ENCODE measurements at regions of chr19 and their contacts with region 1.

Region 1: GRCh38 chr19:16659831-16660708 is at the start of gene SMIM7:
- DNase-seq: peak; percentile 99
- H3K4me3 Mint-ChIP-seq: peak within 1 kb of the TSS; percentile 98
- H3K27ac Mint-ChIP-seq: peak within 1 kb of the TSS; percentile 97
- H3K4me1 Mint-ChIP-seq: peaks cover 52% of the 10 kb centered on the region
- H3K27me3 Mint-ChIP-seq: peaks cover 13% of the 10 kb centered on the region
- total RNA-seq, gene SMIM7: 52.6 to 60.6 TPM

Region 2: DNA sequence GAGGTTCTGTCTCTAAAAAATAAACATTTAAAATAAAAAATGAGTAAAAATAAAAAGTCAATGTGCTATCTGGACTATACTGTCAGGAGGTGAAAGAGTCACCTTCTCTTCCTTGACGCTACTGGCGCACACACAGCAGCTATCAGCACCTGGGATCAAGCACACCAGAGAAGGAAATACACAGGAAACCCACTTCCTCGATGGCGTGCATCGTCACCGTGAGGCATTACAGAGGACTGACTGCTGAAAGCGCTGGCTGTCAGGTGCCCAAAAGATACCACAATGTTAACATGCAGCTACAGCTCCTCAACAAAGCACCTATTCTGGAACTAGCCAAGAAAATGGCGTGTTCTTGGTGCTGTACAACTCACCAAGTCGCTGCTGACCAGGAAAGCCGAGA is 93.9 kb before region 1 on chr19:
- CTCF ChIA-PET with region 1: no interaction called
- POLR2A ChIA-PET with region 1: interaction called, 12 read pairs
- DNase-seq: peak; percentile 91
- H3K4me3 Mint-ChIP-seq: peak overlapping the region; percentile 62
- H3K27ac Mint-ChIP-seq: peak overlapping the region; percentile 100
- H3K4me1 Mint-ChIP-seq: peaks cover 61% of the 10 kb centered on the region
- H3K27me3 Mint-ChIP-seq: no peaks in the 10 kb centered on the region

Region 3: DNA sequence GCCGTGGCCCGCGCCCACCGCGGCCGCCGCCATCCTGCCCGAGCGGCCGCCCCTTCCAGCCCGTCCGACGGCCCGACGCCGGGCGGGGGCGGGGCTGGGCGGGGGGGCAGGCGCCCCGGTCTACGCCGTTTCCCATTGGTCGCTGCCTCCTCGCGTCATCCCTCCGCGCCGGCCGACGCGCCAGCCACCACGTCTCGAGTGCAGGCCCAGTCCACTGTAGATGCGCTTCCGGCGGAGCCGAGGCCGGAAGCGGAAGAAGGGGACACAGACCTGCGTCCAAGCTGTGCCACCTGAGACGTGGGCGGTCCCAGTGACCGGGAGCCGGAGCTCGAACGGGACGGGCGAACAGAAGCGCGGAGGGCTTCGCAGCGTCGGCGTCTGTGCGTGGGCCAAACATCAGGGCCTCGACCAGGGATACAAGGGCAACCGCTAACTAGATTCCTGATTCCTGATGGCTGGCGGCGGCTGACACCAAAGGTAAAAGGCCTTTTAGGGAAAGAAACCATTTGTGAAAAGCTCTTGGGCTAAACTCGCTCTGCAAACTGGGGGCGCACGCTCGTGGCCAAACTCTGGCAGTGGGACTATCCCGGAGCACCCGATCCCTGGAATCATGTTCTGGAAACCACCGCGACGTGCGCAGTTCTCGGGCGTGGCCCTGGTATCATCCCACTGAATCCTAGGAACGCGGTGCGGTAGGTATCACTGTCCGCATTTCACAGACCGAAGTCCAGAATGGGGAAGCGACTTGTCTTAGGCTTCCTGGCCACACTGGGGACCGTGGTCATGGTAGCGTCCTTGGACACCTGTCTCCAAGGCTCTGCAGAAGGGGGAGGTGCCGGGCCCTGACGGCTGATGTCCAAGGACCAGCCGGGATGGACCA is 87.5 kb before region 1 on chr19 and contains the start of gene SLC35E1:
- CTCF ChIA-PET with region 1: no interaction called
- POLR2A ChIA-PET with region 1: interaction called, 13 read pairs
- DNase-seq: peak; percentile 93
- H3K4me3 Mint-ChIP-seq: peak within 1 kb of the TSS; percentile 93
- H3K27ac Mint-ChIP-seq: peak within 1 kb of the TSS; percentile 90
- H3K4me1 Mint-ChIP-seq: peaks cover 68% of the 10 kb centered on the region
- H3K27me3 Mint-ChIP-seq: no peaks in the 10 kb centered on the region
- total RNA-seq, gene SLC35E1: 57.3 to 57.7 TPM

Region 4: GRCh38 chr19:16584248-16585141 is 75.6 kb before region 1 on chr19:
- CTCF ChIA-PET with region 1: interaction called, 4 read pairs
- POLR2A ChIA-PET with region 1: interaction called, 12 read pairs
- DNase-seq: peak; percentile 93
- H3K4me3 Mint-ChIP-seq: peak overlapping the region; percentile 77
- H3K27ac Mint-ChIP-seq: peak overlapping the region; percentile 90
- H3K4me1 Mint-ChIP-seq: peaks cover 83% of the 10 kb centered on the region
- H3K27me3 Mint-ChIP-seq: no peaks in the 10 kb centered on the region

Region 5: GRCh38 chr19:16649734-16650133 is 10.3 kb before region 1 on chr19:
- CTCF ChIA-PET with region 1: no interaction called
- POLR2A ChIA-PET with region 1: interaction called, 22 read pairs
- DNase-seq: no peak
- H3K4me3 Mint-ChIP-seq: no peak overlapping the region
- H3K27ac Mint-ChIP-seq: no peak overlapping the region
- H3K4me1 Mint-ChIP-seq: peaks cover 11% of the 10 kb centered on the region
- H3K27me3 Mint-ChIP-seq: no peaks in the 10 kb centered on the region

Region 6: DNA sequence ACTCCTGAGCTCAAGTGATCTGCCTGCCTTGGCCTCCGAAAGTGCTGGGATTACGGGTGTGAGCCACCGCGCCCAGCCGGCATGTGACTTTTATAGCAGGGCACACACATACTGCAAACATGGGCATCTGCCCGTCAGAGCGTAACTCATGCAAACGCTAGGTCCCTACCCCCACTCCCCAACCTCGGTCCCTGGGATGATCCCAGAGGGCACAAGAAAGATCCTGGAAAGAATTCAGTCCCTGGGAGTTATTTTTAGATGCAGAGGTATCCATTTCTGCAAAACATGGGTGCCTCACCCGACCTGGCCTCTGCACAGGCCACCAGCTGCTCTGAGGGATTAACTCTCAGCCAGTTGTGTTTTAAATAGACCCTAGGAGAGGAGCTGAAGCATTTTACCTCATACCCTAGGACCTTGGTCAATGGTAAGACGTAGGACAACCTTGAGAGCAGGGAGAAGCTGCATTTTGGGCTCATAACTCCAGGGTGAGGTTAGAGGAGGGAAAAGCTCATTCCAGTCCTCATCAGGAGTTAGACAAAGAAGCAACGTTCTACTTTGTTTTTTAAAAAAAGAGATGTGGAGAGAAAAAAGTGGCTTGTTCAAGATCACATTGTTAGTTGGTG is 11.7 kb after region 1 on chr19:
- CTCF ChIA-PET with region 1: interaction called, 7 read pairs
- POLR2A ChIA-PET with region 1: interaction called, 13 read pairs
- DNase-seq: no peak
- H3K4me3 Mint-ChIP-seq: no peak overlapping the region
- H3K27ac Mint-ChIP-seq: no peak overlapping the region
- H3K4me1 Mint-ChIP-seq: no peaks in the 10 kb centered on the region
- H3K27me3 Mint-ChIP-seq: no peaks in the 10 kb centered on the region

Region 7: DNA sequence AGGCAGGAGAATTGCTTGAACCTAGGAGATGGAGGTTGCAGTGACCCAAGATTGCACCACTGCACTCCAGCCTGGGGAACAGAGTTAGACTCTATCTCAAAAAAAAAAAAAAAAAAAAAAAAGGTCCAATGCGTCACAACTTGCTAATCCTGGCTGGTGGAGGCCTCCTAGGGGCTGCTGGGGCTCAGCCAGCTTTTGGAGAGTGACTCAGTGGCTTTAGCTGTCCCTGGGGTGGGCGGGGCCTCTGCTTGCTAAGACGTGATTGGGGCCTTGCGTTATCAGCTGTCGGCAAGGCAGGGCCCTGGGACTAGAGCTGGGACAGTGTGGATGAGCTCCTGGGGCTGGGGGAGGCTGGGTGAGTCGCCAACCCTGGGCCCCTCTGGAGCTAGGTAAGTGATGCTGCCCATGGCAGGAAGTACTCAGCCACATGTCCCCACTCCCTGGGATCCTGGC is 260.7 kb after region 1 on chr19:
- CTCF ChIA-PET with region 1: no interaction called
- POLR2A ChIA-PET with region 1: no interaction called
- DNase-seq: no peak
- H3K4me3 Mint-ChIP-seq: no peak overlapping the region
- H3K27ac Mint-ChIP-seq: no peak overlapping the region
- H3K4me1 Mint-ChIP-seq: no peaks in the 10 kb centered on the region
- H3K27me3 Mint-ChIP-seq: no peaks in the 10 kb centered on the region